Posterior cingulate gyrus (tissue), 11 donors: ENCODE measurements at regions of chr13 and their contacts with region 1.

Region 1: GRCh38 chr13:49976314-49977258 is 20.3 kb upstream of the TRIM13 start:
- DNase-seq: peak; percentile 14 to 95 (median 74)

Region 2: GRCh38 chr13:50531917-50532899 is 555.6 kb after region 1 on chr13:
- intact Hi-C with region 1: loop called (anchors 2 kb)
- DNase-seq: no peak

Region 3: GRCh38 chr13:50911937-50912795 is 935.6 kb after region 1 on chr13:
- intact Hi-C with region 1: loop called (anchors 2 kb)
- DNase-seq: peak; percentile 72 to 97 (median 90)

Region 4: DNA sequence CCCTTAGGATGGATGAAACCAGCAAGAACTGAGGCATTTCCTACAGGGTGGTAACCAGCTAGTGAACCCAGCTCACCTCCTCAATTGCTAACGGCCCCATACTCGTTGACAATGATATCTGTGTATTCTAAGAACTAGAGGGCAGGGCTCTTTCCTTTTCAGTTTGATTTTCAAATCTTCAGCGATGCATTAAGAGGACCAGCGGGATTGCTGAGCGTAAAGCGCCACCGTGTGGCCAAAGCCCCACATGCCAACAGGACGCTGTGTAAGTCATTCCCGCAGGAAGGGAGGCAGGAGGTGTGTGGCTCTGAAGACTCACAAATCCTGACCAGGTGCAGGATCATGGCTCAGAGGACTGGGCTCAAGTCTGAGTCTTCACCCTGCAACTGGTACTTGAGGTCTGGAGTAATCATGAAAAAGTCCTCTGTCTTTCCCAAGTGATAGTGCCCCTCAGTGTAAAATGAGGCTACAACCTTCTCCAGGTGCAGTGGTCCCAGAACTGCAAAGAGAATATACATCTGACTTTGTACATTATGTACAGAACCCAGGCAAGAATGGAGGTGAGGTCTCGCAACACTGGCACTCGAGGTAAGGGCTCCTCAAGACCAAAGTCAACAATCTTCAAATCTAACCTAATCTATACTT is 1093.5 kb after region 1 on chr13:
- intact Hi-C with region 1: loop called (anchors 10 kb)
- DNase-seq: peak; percentile 65 to 98 (median 90)